GM10248 (cell line): ENCODE measurements at regions of chr1 and their contacts with region 1.

Region 1: DNA sequence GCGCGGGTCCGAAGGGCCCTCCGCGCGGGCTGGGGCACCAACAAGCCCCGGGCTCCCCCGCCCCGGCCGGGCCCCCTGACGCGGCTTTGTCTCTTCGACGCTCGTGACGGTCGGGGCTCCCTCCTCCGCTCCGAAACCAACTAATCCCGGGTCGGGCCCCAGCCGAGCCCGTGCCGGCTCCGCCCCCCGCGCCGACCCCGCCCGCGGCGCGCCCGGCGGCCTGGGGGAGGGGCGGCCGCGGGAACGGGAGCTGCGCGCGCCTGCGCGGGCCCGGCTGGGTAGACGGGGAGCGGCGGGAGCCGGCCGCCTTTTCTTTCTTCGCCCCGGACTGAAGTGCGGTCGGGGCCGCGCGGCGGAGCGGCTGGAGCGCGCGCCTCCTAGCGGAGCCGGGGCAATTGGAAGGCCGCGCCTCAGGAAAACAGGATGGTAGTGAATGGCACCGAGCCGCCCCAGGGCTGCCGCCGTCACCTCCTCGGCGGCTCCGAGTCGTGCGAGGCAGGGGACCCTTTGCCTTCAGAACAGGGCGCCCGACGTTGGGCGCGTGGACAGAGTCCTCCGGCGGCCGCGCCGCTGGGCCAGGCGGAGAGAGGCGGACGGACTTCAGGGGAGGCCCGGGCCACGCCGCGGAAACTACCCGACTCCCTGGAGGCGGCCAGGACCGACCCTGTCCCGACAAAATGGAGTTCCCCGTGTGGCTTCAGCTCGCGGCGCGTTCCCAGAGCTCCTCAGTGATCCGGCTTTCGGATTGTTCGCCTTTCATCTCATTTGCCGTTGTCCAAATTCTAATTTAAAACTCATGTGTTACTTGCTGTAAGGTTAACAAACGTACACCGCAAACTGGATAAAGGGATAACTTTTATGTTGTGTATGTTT is at the start of gene TP53BP2:
- DNase-seq: peak; percentile 87
- CTCF ChIP-seq: peak; percentile 83

Region 2: DNA sequence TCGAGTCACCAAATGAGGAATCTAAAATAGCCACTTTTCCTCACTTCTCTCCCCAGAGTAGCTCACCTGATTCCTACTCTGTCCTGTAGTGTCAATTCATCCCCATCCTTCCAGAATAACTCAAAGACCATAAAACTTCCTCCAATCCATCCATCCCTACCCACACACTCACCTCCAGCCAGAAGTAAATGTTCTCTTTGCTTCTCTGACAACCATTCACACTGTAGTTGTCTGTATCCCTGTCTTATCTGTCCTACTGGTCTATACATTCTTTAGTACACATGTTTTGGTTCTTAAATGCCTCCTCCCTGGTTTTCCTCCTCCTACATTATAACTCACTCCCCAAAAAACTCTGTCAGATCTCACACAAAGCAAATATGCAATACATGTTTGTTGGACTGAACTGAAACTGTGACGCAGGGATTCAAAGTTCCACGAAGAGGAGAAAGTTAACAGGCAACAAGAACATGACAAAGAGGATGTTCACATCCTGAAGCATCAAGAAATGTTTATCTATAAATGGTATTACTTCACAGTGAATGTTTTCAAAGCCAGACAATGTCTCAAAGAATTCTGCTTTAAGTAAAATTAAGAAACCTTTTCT is 11.3 kb before region 1 on chr1:
- CTCF ChIA-PET with region 1: interaction called, 14 read pairs
- POLR2A ChIA-PET with region 1: interaction called, 3 read pairs
- DNase-seq: no peak
- CTCF ChIP-seq: no peak

Region 3: GRCh38 chr1:223860051-223860622 is 14.1 kb after region 1 on chr1:
- CTCF ChIA-PET with region 1: interaction called, 14 read pairs
- POLR2A ChIA-PET with region 1: no interaction called
- DNase-seq: no peak
- CTCF ChIP-seq: no peak